ENCODE measurements at regions of chr12 and their contacts with region 1.

Region 1: GRCh38 chr12:1927751-1928351 is 9.4 kb upstream of the CACNA2D4 start:
- DNase-seq: peak; percentile 16
- H3K4me3 ChIP-seq: no peak overlapping the region
- CTCF ChIP-seq: no peak

Region 2: GRCh38 chr12:1851151-1851701 is 76.6 kb before region 1 on chr12:
- in situ Hi-C with region 1: no loop called
- DNase-seq: peak; percentile 71
- H3K4me3 ChIP-seq: no peak overlapping the region
- CTCF ChIP-seq: no peak

Region 3: GRCh38 chr12:1885599-1886245 is 42.1 kb before region 1 on chr12:
- in situ Hi-C with region 1: loop called (anchors 5 kb)
- DNase-seq: no peak
- H3K4me3 ChIP-seq: no peak overlapping the region
- CTCF ChIP-seq: no peak